ENCODE measurements at regions of chr6 and their contacts with region 1.

Region 1: DNA sequence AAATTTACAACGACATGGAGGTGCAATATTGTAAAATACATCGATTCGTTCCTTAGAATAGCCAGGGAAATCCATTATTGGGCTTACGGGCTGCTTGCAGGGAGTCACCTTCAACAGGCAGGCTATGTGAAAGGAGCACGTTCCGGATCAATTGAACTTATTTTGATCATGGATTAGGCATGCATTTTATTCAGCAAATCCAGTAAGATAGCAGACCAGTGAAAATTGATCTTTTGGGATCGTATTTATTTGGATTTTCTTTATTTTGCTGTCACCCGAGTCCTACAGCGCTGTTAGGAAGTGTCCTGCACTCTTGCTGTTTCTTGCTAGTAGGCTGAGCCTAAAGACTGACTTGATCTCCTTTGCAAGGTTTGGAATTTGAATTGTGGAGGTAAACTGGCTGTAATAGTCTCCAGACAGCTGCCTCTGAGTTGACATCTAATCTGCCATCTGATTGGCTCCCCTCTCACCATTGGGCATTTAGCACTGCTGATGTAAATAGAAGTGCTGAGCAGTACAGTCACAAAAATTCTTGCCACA is 3.0 kb downstream of the ARID1B start:
- DNase-seq: peak; percentile 76 to 91
- H3K4me3 ChIP-seq: peak overlapping the region; percentile 64
- H3K4me1 ChIP-seq: peaks cover 23% of the 10 kb centered on the region
- H3K27me3 ChIP-seq: no peaks in the 10 kb centered on the region

Region 2: GRCh38 chr6:156599978-156600590 is 180.1 kb before region 1 on chr6:
- in situ Hi-C with region 1: no loop called
- DNase-seq: no peak
- H3K4me3 ChIP-seq: no peak overlapping the region
- H3K4me1 ChIP-seq: no peaks in the 10 kb centered on the region
- H3K27me3 ChIP-seq: no peaks in the 10 kb centered on the region

Region 3: GRCh38 chr6:156617376-156617775 is 162.8 kb before region 1 on chr6:
- in situ Hi-C with region 1: no loop called
- DNase-seq: peak in 1 of 2 experiments; percentile 26
- H3K4me3 ChIP-seq: no peak overlapping the region
- H3K4me1 ChIP-seq: no peaks in the 10 kb centered on the region
- H3K27me3 ChIP-seq: no peaks in the 10 kb centered on the region

Region 4: GRCh38 chr6:156949376-156949775 is 169.2 kb after region 1 on chr6:
- in situ Hi-C with region 1: loop called (anchors 10 kb)
- DNase-seq: no peak
- H3K4me3 ChIP-seq: no peak overlapping the region
- H3K4me1 ChIP-seq: peaks cover 44% of the 10 kb centered on the region
- H3K27me3 ChIP-seq: no peaks in the 10 kb centered on the region

Measured in HAP-1 (cell line).